ENCODE measurements at regions of chr20 and their contacts with region 1.

Region 1: DNA sequence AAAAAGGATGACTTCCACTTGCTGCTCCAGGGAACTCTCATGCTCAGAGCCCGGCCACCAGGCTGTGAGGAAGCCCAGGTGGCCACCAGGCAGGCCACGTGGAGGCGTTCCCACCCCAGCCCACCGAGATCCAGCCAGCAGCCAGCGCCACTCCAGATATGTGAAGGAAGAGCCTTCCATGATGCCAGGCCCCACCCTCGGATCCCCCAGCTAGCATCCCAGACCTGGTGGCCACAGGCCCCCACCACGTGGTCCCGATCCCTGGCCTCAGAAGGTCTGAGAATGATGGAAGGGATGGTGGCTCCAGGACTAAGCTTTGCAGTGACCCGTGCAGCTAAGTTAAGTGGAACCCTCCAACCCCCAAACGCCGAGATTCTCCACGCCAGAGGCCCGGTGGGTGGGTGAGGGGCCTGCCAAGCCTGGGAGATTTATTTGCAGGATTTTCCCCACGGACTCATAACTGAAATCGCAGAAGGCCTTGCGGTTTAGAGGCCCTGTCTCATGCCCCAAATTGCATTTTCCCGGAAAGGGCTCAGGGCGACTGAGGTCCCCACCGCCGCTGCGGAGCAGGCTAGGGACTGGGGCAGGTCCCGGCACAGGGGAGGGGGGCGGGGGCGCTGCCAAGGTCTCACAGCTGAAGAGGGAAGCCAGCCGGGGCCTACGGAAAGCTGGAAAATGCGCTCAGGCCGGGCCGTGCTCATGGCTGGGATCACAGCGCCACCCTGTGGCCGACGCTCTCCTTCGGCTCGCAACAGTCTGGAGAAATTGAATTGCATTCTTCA is 31.1 kb upstream of the CST7 start:
- DNase-seq: peak; percentile 59 to 91 (median 80)

Region 2: GRCh38 chr20:24149881-24150307 is 768.1 kb before region 1 on chr20:
- intact Hi-C with region 1: loop called (anchors 10 kb)
- DNase-seq: peak in 2 of 42 donors; percentile 28 to 32

Region 3: GRCh38 chr20:25237610-25238318 is 319.8 kb after region 1 on chr20:
- intact Hi-C with region 1: no loop called
- DNase-seq: peak in 36 of 42 donors; percentile 26 to 88 (median 62)

Measured in head of caudate nucleus (tissue), 42 donors.